ENCODE measurements at regions of chr7 and their contacts with region 1.

Region 1: GRCh38 chr7:1123715-1124114 is 35.8 kb downstream of the GPER1 start:
- DNase-seq: peak; percentile 86
- ATAC-seq: peak; percentile 96
- H3K4me3 Mint-ChIP-seq: no peak overlapping the region
- H3K27ac Mint-ChIP-seq: peak overlapping the region; percentile 84; the same call in 1 of the 2 replicates
- H3K4me1 Mint-ChIP-seq: peaks cover 8% of the 10 kb centered on the region
- H3K27me3 Mint-ChIP-seq: no peaks in the 10 kb centered on the region
- CTCF ChIP-seq: no peak

Region 2: DNA sequence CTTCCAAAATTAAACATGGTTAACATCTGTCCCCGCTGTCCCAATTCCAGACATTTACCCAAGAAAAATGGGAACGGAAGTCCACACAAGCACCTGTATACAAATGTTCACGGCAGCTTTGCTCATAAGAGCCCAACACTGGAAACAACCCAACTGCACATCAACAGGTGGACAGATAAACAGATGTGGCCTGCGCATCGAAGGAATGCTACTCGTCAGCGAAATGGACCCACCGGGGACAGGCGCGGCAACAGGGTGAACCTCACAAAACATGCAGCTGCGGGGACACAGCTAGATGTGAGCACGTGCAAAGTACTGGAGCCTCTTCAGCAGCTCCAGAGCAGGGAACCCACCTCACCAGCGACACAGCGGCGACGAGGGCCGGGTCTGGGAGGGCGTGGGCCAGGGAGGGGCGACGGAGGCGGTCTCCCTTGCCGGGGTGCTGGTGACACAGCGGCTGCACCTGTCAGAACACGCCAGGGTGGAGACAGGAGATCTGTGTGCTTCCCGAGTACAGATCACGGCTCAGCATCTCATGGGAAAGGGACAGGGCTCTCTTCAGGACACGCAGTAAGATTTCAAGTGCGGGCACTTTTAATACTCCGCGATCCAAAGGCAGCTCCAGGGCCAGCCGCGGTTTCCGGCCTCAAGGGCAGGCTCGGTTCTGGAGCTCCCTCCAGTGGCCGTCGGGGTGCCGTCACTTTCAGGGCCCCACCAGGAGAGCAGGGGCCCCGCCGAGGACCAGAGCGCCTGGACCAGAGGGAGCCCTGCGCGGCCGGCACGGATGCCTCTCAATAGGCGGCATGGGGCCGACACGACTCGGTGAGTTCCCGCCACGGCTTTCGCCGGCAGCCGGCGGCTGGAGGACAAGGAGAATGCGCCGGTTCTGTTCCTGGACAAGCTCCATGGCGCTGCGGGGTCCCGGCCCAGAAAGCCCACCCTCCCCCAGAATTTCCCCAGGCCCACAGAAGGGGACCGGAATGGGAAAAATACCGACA is 58.2 kb before region 1 on chr7:
- CTCF ChIA-PET with region 1: interaction called, 16 read pairs
- POLR2A ChIA-PET with region 1: no interaction called
- DNase-seq: peak; percentile 92
- ATAC-seq: peak; percentile 91
- H3K4me3 Mint-ChIP-seq: no peak overlapping the region
- H3K27ac Mint-ChIP-seq: no peak overlapping the region; the same call in 1 of the 2 replicates
- H3K4me1 Mint-ChIP-seq: 0 out of 2 replicates have a peak, but pooled peaks cover 3% of the 10 kb centered on the region
- H3K27me3 Mint-ChIP-seq: no peaks in the 10 kb centered on the region
- CTCF ChIP-seq: peak; percentile 72

Region 3: DNA sequence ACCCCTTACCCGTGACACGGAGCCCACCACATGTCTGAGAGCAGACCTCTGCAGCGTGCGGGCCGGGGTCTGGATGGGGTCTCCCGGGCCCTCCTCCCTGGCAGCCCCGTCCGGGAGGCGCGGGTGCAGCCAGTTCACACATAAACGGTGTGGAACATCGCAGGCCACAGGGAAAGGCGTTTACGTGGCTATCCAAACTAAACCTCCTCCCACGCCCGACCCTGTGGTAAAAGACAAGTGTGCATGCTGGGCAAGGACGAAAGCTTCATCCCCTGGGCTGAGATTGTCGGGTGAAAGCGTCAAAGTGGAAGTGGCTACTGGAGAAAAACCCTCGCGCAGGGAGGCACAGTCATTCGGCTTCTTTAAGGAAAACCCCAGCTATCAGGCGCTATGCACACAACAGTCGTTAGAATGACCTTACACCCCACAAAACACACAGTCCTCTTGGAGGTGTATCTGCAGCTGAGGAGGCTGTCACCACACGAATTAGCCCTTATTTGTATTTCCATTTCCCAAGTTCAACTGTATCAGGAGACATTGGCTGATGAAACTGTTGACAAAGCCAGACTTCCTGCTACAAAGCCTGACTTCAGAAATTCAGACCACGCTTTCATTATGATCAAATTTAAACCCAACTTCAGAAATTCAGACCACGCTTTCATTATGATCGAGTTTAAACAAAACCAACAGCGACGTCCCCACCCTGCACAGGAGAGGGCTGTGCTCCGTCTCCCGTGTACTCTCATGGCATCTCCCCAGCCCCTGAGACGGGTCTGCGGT is 20.5 kb before region 1 on chr7:
- CTCF ChIA-PET with region 1: interaction called, 12 read pairs
- POLR2A ChIA-PET with region 1: no interaction called
- DNase-seq: no peak
- ATAC-seq: no peak
- H3K4me3 Mint-ChIP-seq: no peak overlapping the region
- H3K27ac Mint-ChIP-seq: peak overlapping the region; percentile 36; the same call in 1 of the 2 replicates
- H3K4me1 Mint-ChIP-seq: no peaks in the 10 kb centered on the region
- H3K27me3 Mint-ChIP-seq: no peaks in the 10 kb centered on the region
- CTCF ChIP-seq: no peak

Region 4: GRCh38 chr7:1137510-1138167 is 13.9 kb after region 1 on chr7:
- CTCF ChIA-PET with region 1: interaction called, 36 read pairs
- POLR2A ChIA-PET with region 1: interaction called, 7 read pairs
- DNase-seq: no peak
- ATAC-seq: peak; percentile 38
- H3K4me3 Mint-ChIP-seq: peak overlapping the region; percentile 93
- H3K27ac Mint-ChIP-seq: peak overlapping the region; percentile 93; the same call in 1 of the 2 replicates
- H3K4me1 Mint-ChIP-seq: peaks cover 8% of the 10 kb centered on the region
- H3K27me3 Mint-ChIP-seq: peaks cover 2% of the 10 kb centered on the region; the same call in 1 of the 2 replicates
- CTCF ChIP-seq: no peak

Region 5: GRCh38 chr7:1175967-1176851 is 52.5 kb after region 1 on chr7:
- CTCF ChIA-PET with region 1: interaction called, 22 read pairs
- POLR2A ChIA-PET with region 1: no interaction called
- DNase-seq: peak; percentile 95
- ATAC-seq: peak; percentile 89
- H3K4me3 Mint-ChIP-seq: peak overlapping the region; percentile 33
- H3K27ac Mint-ChIP-seq: no peak overlapping the region; the same call in 1 of the 2 replicates
- H3K4me1 Mint-ChIP-seq: no peaks in the 10 kb centered on the region
- H3K27me3 Mint-ChIP-seq: peaks cover 12% of the 10 kb centered on the region
- CTCF ChIP-seq: peak; percentile 94